ENCODE measurements at regions of chr22 and their contacts with region 1.

Region 1: DNA sequence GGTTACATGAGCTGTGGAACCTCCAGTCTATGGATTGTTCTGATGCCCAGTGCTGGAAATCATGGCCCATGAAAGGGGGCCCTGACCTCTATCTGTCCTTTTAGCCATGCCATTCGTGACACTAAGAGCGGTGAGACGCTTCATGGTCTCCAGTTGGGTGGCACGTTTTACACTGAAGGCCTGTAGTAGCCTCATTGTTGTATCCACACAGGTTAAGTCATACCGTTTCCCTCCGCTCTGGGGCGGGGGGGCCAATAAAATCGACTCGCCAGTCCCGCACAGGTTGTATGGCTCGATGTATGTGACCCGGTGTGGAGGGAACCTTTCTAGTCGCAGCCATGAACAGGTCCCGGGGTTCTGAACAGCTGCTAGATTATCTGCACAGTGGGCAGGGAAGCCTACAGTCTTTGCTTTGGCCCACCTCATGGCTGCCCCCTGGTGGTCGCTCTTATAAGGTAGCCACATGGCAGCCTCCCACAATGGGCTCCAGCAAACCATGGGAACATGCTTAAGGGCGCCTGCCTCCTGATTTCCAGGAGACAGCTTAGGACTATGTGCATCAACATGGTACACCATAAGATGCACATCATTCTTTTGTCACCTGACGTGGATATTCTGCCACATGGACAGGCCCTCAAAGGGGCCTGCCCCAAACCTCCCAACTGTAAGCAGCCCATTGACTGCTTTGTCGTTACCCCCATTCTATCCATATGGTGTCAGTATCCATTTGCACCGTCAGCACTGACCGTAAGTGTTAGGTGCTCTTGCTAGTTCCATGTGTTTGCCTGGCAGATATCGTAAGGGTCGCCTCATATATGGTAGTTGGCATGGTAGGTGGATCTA is 19.7 kb upstream of the APOL3 start:
- DNase-seq: peak; percentile 94
- ATAC-seq: peak; percentile 98
- H3K4me3 Mint-ChIP-seq: no peak overlapping the region
- H3K27ac Mint-ChIP-seq: no peak overlapping the region
- H3K4me1 Mint-ChIP-seq: peaks cover 11% of the 10 kb centered on the region
- H3K27me3 Mint-ChIP-seq: no peaks in the 10 kb centered on the region
- CTCF ChIP-seq: peak; percentile 95

Region 2: DNA sequence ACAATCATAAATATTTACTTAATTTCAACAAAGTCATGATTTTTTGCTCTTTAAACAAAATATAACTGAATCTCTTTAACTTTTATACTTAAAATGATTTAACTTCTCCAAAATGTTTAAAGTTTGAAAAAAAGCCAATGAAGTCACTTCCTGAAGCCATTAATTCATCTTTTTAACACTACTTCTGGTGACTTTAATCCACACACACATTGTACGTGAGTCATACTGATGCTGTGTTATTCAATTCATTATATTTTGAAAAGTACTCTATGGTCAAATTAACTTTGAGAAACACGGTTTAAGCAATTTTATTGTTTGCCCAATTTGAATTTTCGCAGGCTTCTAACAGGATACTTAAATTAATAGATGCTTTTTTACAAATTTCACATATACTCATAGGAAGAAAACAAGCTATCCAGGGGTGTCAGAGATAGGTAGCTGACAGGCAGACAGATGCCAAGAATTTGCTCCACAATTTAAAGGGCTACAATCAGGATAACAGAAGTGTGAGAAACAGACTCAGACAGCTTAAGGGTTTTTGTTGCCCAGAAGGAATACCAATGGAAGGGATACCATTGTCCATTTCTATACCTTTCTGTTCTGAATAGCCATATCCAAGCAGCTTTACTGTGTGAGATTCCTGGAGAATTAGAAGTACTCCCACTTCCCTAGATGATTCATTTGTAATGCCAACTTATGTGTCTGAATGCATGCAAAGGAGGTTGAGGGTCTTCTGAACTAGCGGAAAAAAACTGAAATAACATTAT is 270.1 kb before region 1 on chr22:
- CTCF ChIA-PET with region 1: no interaction called
- POLR2A ChIA-PET with region 1: no interaction called
- intact Hi-C with region 1: no loop called
- DNase-seq: no peak
- ATAC-seq: no peak
- H3K4me3 Mint-ChIP-seq: no peak overlapping the region
- H3K27ac Mint-ChIP-seq: no peak overlapping the region
- H3K4me1 Mint-ChIP-seq: peaks cover 8% of the 10 kb centered on the region
- H3K27me3 Mint-ChIP-seq: peaks cover 9% of the 10 kb centered on the region
- CTCF ChIP-seq: no peak

Region 3: DNA sequence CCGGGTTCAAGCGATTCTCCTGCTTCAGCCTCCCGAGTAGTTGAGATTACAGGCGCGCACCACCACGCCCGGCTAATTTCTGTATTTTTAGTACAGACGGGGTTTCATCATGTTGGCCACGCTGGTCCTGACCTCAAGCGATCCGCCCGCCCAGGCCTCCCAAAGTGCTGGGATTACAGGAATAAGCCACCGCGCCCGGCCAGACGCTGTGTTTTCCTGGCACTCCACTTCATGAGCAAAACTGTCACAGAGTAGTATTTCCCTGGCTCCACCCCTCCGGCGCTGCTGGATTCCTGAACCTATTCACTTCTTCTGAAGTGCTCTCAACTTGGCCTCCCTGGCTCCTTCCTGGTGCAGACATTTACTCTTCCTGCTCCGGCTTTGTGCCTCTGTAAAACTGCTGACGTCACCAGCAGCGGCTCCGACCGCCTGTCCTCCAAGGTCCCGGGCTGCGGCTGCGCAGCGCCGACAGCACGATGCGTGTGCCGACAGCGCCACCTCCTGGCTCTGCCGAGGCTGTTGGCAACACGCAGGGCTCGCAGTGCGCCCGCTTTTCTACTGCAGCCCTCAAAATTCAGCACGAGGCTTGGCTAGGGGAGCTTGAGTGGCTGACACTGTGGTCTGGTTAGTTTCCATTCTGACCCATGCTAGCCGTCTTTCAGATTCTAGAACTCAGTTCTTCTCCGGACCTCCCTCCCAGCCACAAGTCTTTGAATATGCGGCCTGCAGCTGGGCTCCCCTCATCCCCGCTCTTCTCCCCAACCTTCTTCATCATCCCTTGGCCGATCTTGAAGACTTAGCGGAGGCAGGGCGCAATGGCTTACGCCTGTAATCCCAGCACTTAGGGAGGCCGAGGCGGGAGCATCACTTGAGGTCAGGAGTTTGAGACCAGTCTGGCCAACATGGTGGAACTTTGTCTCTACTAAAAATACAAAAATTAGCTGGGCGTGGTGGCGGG is 56.3 kb before region 1 on chr22:
- CTCF ChIA-PET with region 1: interaction called, 11 read pairs
- POLR2A ChIA-PET with region 1: no interaction called
- intact Hi-C with region 1: no loop called
- DNase-seq: peak; percentile 94
- ATAC-seq: peak; percentile 100
- H3K4me3 Mint-ChIP-seq: peak overlapping the region; percentile 67
- H3K27ac Mint-ChIP-seq: peak overlapping the region; percentile 92
- H3K4me1 Mint-ChIP-seq: peaks cover 11% of the 10 kb centered on the region
- H3K27me3 Mint-ChIP-seq: no peaks in the 10 kb centered on the region
- CTCF ChIP-seq: peak; percentile 96

Region 4: GRCh38 chr22:36136475-36136874 is 43.8 kb before region 1 on chr22:
- CTCF ChIA-PET with region 1: interaction called, 115 read pairs
- POLR2A ChIA-PET with region 1: interaction called, 4 read pairs
- intact Hi-C with region 1: no loop called
- DNase-seq: no peak
- ATAC-seq: no peak
- H3K4me3 Mint-ChIP-seq: no peak overlapping the region
- H3K27ac Mint-ChIP-seq: no peak overlapping the region
- H3K4me1 Mint-ChIP-seq: peaks cover 17% of the 10 kb centered on the region
- H3K27me3 Mint-ChIP-seq: no peaks in the 10 kb centered on the region
- CTCF ChIP-seq: no peak

Region 5: DNA sequence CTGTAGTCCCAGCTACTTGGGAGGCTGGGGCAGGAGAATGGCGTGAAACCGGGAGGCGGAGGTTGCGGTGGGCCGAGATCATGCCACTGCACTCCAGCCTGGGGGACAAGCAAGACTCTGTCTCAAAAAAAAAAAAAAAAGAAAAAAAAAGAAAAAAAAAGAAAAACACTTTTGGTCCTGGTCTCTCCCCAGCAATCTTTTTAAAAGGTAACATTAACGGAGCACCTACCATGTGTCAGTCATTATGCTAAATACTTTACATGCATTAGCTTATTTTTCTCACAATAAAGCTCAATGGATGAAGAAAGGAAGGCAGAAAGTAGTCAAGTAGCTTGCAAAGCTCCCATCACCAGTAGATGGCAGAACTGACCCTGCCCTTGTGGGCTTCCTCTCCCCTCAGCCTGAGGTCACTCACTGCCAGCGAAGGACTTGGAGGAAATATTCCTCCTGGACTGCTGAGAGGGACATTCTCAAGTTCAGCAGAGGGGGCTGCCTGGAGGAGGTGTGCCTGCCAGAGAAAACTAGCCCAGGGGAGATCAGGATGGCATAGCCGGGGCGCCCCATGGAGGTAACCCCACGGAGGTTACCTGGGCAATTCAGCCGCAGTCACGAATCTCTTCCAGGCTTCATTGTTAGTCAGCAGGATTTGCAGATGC is 35.2 kb before region 1 on chr22:
- CTCF ChIA-PET with region 1: interaction called, 115 read pairs
- POLR2A ChIA-PET with region 1: interaction called, 4 read pairs
- intact Hi-C with region 1: loop called (anchors 1 kb)
- DNase-seq: peak; percentile 63
- ATAC-seq: peak; percentile 78
- H3K4me3 Mint-ChIP-seq: no peak overlapping the region
- H3K27ac Mint-ChIP-seq: no peak overlapping the region
- H3K4me1 Mint-ChIP-seq: peaks cover 24% of the 10 kb centered on the region
- H3K27me3 Mint-ChIP-seq: no peaks in the 10 kb centered on the region
- CTCF ChIP-seq: peak; percentile 80

Region 6: DNA sequence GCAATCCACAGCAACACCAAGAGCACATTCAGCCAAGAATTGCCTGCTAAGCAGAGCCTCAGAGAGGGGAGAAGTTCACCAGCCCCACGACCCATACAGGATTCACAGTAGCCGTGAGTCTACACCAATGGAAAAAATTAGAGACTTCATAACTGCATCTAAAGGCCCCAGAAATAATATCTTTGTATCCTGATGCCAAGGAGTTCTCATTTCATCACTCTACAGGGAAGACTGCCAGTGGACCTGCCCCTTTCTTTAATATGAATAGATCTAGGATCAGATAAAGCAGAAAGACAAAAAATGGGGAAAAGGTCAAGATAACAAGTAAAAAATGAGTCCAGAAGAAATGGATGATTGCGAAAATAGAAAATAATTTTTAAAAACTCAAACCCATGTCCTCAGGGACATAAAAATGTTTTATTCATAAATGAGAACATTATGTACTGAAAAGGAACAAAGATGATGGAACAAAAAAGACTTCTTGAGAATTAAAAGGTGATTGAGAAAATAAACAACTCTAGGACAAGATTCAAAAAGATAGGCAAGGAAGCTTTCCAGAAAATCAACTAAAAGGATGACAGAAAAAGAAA is 29.2 kb before region 1 on chr22:
- CTCF ChIA-PET with region 1: interaction called, 115 read pairs
- POLR2A ChIA-PET with region 1: no interaction called
- intact Hi-C with region 1: no loop called
- DNase-seq: no peak
- ATAC-seq: no peak
- H3K4me3 Mint-ChIP-seq: no peak overlapping the region
- H3K27ac Mint-ChIP-seq: peak overlapping the region; percentile 74
- H3K4me1 Mint-ChIP-seq: peaks cover 67% of the 10 kb centered on the region
- H3K27me3 Mint-ChIP-seq: no peaks in the 10 kb centered on the region
- CTCF ChIP-seq: no peak

Region 7: GRCh38 chr22:36156515-36157419 is 23.5 kb before region 1 on chr22:
- CTCF ChIA-PET with region 1: interaction called, 156 read pairs
- POLR2A ChIA-PET with region 1: interaction called, 3 read pairs
- intact Hi-C with region 1: no loop called
- DNase-seq: peak; percentile 88
- ATAC-seq: peak; percentile 50
- H3K4me3 Mint-ChIP-seq: peak overlapping the region; percentile 89
- H3K27ac Mint-ChIP-seq: peak overlapping the region; percentile 99
- H3K4me1 Mint-ChIP-seq: peaks cover 87% of the 10 kb centered on the region
- H3K27me3 Mint-ChIP-seq: no peaks in the 10 kb centered on the region
- CTCF ChIP-seq: no peak

Region 8: GRCh38 chr22:36286471-36287224 is 106.4 kb after region 1 on chr22:
- CTCF ChIA-PET with region 1: no interaction called
- POLR2A ChIA-PET with region 1: no interaction called
- intact Hi-C with region 1: no loop called
- DNase-seq: peak; percentile 75
- ATAC-seq: peak; percentile 91
- H3K4me3 Mint-ChIP-seq: no peak overlapping the region
- H3K27ac Mint-ChIP-seq: peak overlapping the region; percentile 44
- H3K4me1 Mint-ChIP-seq: peaks cover 18% of the 10 kb centered on the region
- H3K27me3 Mint-ChIP-seq: no peaks in the 10 kb centered on the region
- CTCF ChIP-seq: peak; percentile 72